ENCODE measurements at regions of chr18 and their contacts with region 1.

Region 1: DNA sequence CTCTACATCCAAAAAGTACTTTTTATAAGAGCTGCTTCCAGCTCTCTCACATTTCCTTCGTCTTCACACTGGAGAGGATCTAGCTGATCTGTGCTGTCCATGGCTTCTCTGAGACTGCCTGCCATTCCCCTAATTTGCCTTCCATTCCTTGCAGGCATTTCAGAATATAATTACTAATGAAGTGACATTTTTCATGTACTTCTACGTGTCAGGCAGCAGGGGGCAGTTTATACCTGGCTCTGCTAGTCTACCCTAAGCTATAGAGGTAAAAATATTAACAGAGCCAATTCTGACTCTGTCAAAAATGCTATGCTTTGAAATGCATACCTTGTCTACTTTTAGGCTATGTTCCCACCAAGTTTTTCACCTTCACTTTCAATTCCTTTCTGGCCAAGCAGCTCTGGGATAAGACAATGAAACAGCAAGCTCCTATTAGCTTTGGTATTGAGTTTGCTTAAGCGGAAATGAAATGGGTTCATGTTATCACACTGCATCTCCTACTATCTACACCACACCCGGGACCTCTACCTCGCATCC is 81.9 kb downstream of the MEP1B start:
- DNase-seq: peak; percentile 81

Region 2: GRCh38 chr18:32158108-32158624 is 113.6 kb before region 1 on chr18:
- CTCF ChIA-PET with region 1: interaction called, 19 read pairs
- POLR2A ChIA-PET with region 1: no interaction called
- DNase-seq: peak; percentile 97

Region 3: DNA sequence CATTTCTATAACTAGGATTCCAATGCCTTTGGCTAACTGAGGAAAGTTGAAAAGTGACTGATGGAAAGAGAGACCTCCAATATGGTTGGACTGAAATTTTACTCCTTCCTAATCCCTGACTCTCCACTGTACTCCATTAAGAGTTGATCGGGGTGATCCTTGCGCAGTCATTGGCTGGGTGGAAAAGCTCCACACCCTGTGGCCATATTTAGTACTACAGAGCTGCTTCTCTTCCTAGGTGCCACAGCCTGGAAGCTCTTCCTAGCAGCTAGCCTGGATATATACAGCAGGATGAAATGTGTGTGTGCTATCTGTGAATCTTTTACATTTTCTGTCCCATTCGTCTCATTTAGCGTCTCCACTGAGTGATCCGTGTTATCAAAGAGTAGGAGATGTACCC is 10.7 kb before region 1 on chr18:
- CTCF ChIA-PET with region 1: interaction called, 11 read pairs
- POLR2A ChIA-PET with region 1: no interaction called
- DNase-seq: peak; percentile 57

Region 4: GRCh38 chr18:32284284-32284683 is 12.5 kb after region 1 on chr18:
- CTCF ChIA-PET with region 1: interaction called, 20 read pairs
- POLR2A ChIA-PET with region 1: no interaction called
- DNase-seq: no peak

Region 5: GRCh38 chr18:32308493-32309120 is 36.9 kb after region 1 on chr18:
- CTCF ChIA-PET with region 1: no interaction called
- POLR2A ChIA-PET with region 1: no interaction called
- DNase-seq: no peak

Region 6: GRCh38 chr18:32439802-32440201 is 168.1 kb after region 1 on chr18:
- CTCF ChIA-PET with region 1: interaction called, 12 read pairs
- POLR2A ChIA-PET with region 1: no interaction called
- DNase-seq: peak; percentile 76

Region 7: DNA sequence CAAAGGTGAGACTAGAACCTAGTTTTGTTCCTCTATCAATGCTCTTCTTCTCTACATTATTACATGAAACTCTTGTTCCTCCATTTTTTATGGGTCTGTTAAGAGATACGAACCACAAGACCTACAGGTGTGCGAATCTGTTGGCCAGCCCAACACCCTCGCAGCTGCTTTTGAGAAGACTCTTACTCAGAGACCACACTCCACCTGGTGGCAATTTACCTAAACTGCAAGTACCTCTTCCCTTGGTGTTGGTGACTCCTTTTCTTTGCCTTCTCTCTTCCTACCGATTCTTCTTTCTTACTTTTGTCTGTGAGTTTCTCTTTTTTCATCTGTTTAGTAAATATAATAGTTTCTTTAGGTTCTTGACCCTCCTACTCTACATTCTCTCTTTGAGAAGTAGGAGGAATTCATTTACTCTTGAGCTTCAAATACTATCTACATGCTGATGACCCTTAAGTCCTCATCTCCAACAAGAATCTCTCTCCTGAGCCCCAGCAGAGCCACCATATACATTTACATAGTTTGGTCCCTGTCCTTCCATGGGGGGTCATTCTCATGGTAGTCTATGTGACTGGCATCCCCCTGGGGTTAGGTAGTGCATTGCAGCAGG is 280.8 kb after region 1 on chr18:
- CTCF ChIA-PET with region 1: interaction called, 102 read pairs
- POLR2A ChIA-PET with region 1: no interaction called
- DNase-seq: peak; percentile 85